Heart left ventricle (tissue), 16 donors: ENCODE measurements at regions of chr11 and their contacts with region 1.

Region 1: GRCh38 chr11:120482149-120482548 is 29.4 kb upstream of the GRIK4 start:
- DNase-seq: no peak
- ATAC-seq: no peak
- H3K4me3 ChIP-seq: no peak overlapping the region
- H3K27ac ChIP-seq: no peak overlapping the region
- H3K4me1 ChIP-seq: peaks cover 0 to 8% (median 0%) of the 10 kb centered on the region in 12 donors
- H3K27me3 ChIP-seq: no peaks in the 10 kb centered on the region
- CTCF ChIP-seq: no peak
- POLR2A ChIP-seq: no peak

Region 2: DNA sequence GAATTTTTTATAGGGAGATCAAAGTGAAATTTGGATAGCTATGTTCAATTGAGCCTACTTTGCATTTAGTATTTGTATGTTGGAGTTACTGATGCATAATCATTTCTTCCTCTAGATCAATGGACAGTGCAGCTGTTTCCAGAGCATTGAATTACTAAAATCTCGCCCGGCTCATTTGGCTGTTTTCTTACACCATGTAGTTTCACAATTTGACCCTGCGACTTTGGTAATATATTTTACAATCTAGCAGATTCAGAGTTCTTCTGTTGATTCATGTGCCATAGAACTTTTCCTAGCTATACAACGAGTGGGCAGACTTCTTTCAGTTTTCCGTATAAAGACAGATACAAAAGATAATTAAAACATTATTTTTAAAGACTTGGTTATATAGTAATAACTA is 40.6 kb before region 1 on chr11:
- intact Hi-C with region 1: loop called in 1 of 10 experiments (anchors 5 kb)
- DNase-seq: no peak
- ATAC-seq: no peak
- H3K4me3 ChIP-seq: no peak overlapping the region
- H3K27ac ChIP-seq: no peak overlapping the region
- H3K4me1 ChIP-seq: no peaks in the 10 kb centered on the region
- H3K27me3 ChIP-seq: no peaks in the 10 kb centered on the region
- CTCF ChIP-seq: no peak
- POLR2A ChIP-seq: no peak

Region 3: GRCh38 chr11:120601536-120601935 is 119.4 kb after region 1 on chr11:
- intact Hi-C with region 1: no loop called
- DNase-seq: no peak
- ATAC-seq: no peak
- H3K4me3 ChIP-seq: no peak overlapping the region
- H3K27ac ChIP-seq: no peak overlapping the region
- H3K4me1 ChIP-seq: no peaks in the 10 kb centered on the region
- H3K27me3 ChIP-seq: peaks cover 0 to 9% (median 0%) of the 10 kb centered on the region in 9 donors
- CTCF ChIP-seq: no peak
- POLR2A ChIP-seq: no peak